ENCODE measurements at regions of chr5 and their contacts with region 1.

Region 1: DNA sequence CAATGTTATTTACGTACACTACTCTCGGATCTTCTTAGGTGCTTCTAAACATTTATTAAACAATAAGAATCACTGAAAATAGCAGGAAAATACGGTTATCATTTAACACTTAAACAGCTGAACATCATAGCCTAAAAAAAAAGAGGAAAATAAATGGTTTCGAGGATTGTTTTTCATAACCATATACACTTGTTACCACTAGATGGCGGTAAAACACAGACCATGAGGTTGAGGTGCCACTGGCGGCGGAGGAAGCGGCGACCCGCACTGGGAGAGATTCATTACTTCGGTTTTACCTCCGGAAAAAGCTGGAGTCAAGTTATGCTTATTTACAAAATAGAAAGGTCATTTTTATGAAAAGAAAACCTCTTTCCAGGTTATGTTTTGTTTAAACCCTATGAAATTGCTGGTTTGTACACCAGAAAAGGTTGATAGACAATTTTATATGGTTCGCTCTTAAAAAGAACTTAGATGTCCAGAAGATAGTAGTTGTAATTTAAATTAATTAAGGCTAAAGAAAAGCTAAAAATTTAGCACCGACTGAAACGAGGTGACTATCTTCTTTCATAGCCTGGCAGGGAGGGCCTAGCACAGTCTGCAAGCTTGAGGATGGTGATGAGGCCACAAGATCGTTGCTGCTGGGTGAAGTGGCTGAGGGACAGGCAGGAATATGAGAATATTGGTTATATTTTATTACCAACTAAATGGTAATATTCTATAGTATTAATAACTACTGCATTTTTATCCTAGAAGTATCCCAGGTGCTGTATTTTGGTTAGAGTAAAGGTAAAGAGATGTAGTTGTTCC is 605.7 kb downstream of the RAB3C start:
- DNase-seq: no peak
- H3K4me3 ChIP-seq: peak overlapping the region; percentile 23 to 43 (median 40)
- H3K27ac ChIP-seq: peak overlapping the region; percentile 31 to 66 (median 63)
- H3K4me1 ChIP-seq: peaks cover 12 to 44% (median 35%) of the 10 kb centered on the region in 4 donors
- H3K27me3 ChIP-seq: no peaks in the 10 kb centered on the region
- CTCF ChIP-seq: peak; percentile 76 to 92 (median 82)
- EP300 ChIP-seq: no peak
- POLR2A ChIP-seq: no peak

Region 2: GRCh38 chr5:58172946-58173345 is 1015.7 kb before region 1 on chr5:
- intact Hi-C with region 1: no loop called
- DNase-seq: no peak
- H3K4me3 ChIP-seq: no peak overlapping the region
- H3K27ac ChIP-seq: no peak overlapping the region
- H3K4me1 ChIP-seq: no peaks in the 10 kb centered on the region
- H3K27me3 ChIP-seq: no peaks in the 10 kb centered on the region
- CTCF ChIP-seq: no peak
- EP300 ChIP-seq: no peak
- POLR2A ChIP-seq: no peak

Region 3: DNA sequence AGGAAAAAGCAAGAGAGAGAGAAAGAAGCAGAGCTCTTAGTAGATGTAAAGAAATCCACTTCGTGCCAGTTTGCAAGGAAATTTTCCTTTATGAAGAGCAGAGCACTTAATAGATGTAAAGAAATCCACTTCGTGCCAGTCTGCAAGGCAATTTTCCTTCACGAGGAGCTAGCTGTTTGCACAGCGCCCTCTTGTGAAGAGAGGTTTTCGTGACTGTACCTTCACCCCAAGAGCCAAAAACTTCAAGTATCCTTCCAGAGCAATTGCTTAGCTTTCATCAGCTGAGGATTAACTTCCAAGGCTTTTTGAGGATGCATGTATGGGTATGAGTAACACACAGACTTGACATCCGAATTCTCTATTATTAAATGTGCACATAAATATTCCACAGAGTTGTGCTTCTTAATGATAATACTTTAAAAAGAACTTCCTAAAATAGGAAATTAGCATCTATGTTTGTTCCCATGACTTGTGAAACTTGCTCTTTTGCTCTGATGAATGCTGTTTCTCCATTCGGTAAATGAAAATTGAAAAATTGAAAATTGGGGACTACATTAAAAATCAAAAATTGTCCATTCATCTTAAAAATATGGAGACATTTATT is 179.3 kb after region 1 on chr5:
- intact Hi-C with region 1: loop called (anchors 2 kb)
- DNase-seq: no peak
- H3K4me3 ChIP-seq: no peak overlapping the region
- H3K27ac ChIP-seq: no peak overlapping the region
- H3K4me1 ChIP-seq: peaks cover 0 to 10% (median 7%) of the 10 kb centered on the region in 4 donors
- H3K27me3 ChIP-seq: no peaks in the 10 kb centered on the region
- CTCF ChIP-seq: peak; percentile 65 to 80 (median 74)
- EP300 ChIP-seq: no peak
- POLR2A ChIP-seq: no peak

Region 4: GRCh38 chr5:59380350-59380951 is 191.8 kb after region 1 on chr5:
- intact Hi-C with region 1: loop called (anchors 2 kb)
- DNase-seq: no peak
- H3K4me3 ChIP-seq: no peak overlapping the region
- H3K27ac ChIP-seq: no peak overlapping the region
- H3K4me1 ChIP-seq: peaks cover 0 to 2% (median 0%) of the 10 kb centered on the region in 4 donors
- H3K27me3 ChIP-seq: no peaks in the 10 kb centered on the region
- CTCF ChIP-seq: peak; percentile 55 to 66 (median 58)
- EP300 ChIP-seq: no peak
- POLR2A ChIP-seq: no peak

Measured in esophagus muscularis mucosa (tissue), 4 donors.